Thyroid gland (tissue), 4 donors: ENCODE measurements at regions of chr1 and their contacts with region 1.

Region 1: GRCh38 chr1:226634166-226634588 is 85.6 kb downstream of the STUM start:
- DNase-seq: peak; percentile 76
- H3K4me3 ChIP-seq: no peak overlapping the region
- H3K27ac ChIP-seq: peak overlapping the region in 1 of 3 donors; percentile 28
- H3K4me1 ChIP-seq: peaks cover 0 to 3% of the 10 kb centered on the region in 2 donors
- H3K27me3 ChIP-seq: no peaks in the 10 kb centered on the region
- CTCF ChIP-seq: peak; percentile 80 to 96 (median 92)
- POLR2A ChIP-seq: no peak

Region 2: DNA sequence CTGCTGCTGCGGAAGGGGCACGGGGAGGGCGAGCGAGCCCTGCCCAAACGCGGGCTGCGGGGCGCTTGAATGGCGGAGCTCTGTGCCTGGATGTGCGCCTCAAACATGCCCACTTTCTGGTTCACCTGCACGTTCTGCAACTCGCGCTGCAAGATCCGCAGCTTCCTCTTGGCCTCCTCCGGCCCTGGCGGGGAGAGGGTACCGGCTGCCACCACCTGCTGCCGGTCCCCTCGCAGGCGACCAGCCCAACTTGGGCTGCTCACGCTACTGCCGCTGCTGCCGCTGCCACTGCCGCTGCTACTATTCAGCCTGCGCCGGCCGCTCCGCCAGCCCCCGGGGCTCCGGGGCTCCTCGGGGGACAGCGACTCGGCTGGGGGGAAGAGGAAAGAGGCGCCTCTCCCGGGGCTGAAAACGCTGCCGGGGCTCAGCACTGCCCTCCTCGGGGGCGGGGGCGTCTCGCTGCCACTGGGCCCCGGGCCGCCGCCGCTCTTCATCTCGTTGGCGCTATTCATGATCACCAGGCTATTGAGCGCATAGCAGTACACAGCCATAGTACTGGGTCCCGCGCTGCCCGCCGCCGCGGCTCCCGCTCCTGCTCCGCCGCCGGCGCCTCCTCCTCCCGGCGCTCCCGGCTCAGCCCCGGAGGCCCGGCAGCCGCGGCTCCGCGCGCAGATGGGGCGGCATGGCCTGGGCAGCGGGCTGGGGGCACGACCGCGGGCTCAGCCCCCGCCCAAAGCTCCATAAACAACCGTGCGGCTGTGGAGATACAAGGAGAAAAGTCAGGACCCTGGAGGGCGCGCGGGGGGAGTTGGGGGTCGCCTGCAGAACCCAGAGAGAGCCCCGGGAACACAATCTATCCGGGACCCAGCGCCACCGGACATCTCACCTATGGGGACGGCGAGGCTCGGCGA is 103.0 kb after region 1 on chr1:
- intact Hi-C with region 1: loop called (anchors 10 kb)
- DNase-seq: peak; percentile 32 to 37
- H3K4me3 ChIP-seq: peak overlapping the region; percentile 46 to 74 (median 68)
- H3K27ac ChIP-seq: peak overlapping the region; percentile 54 to 85 (median 85)
- H3K4me1 ChIP-seq: peaks cover 26 to 49% of the 10 kb centered on the region in 2 donors
- H3K27me3 ChIP-seq: no peaks in the 10 kb centered on the region
- CTCF ChIP-seq: no peak
- POLR2A ChIP-seq: peak in 1 of 2 donors; percentile 26

Region 3: GRCh38 chr1:226827968-226828513 is 193.9 kb after region 1 on chr1:
- intact Hi-C with region 1: loop called (anchors 2 kb)
- DNase-seq: peak; percentile 91 to 96
- H3K4me3 ChIP-seq: no peak overlapping the region
- H3K27ac ChIP-seq: peak overlapping the region; percentile 34 to 65 (median 41)
- H3K4me1 ChIP-seq: peaks cover 0 to 12% of the 10 kb centered on the region in 2 donors
- H3K27me3 ChIP-seq: no peaks in the 10 kb centered on the region
- CTCF ChIP-seq: peak; percentile 77 to 93 (median 87)
- POLR2A ChIP-seq: no peak

Region 4: DNA sequence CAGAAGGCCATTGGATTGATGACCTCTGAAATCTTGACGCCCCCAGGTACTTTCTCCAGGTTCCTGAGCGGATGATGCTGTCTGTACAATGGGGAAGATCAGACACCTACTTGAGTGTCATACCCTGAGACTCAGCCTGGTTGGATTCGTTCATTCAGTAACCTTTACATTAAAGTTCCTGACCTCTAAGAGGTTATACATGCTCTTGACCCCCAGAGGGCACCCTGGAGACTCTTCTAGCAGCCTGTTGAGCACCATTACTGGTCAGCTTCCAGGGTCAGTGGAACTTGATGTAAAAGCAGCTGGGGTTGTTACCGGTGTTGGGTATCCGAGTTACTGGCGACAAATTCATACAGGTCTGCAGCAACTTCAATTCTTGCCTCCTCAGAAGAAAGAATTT is 814.9 kb after region 1 on chr1:
- intact Hi-C with region 1: loop called (anchors 10 kb)
- DNase-seq: peak; percentile 18 to 24
- H3K4me3 ChIP-seq: no peak overlapping the region
- H3K27ac ChIP-seq: no peak overlapping the region
- H3K4me1 ChIP-seq: no peaks in the 10 kb centered on the region
- H3K27me3 ChIP-seq: no peaks in the 10 kb centered on the region
- CTCF ChIP-seq: peak in 3 of 6 experiments; percentile 20 to 45 (median 24)
- POLR2A ChIP-seq: no peak